Pancreas (tissue), 10 donors: ENCODE measurements at regions of chr6 and their contacts with region 1.

Region 1: GRCh38 chr6:64914134-64914533 is 792.9 kb downstream of the EYS start:
- DNase-seq: no peak
- ATAC-seq: no peak
- H3K4me3 ChIP-seq: no peak overlapping the region
- H3K27ac ChIP-seq: no peak overlapping the region
- H3K4me1 ChIP-seq: no peaks in the 10 kb centered on the region
- H3K27me3 ChIP-seq: no peaks in the 10 kb centered on the region
- CTCF ChIP-seq: no peak

Region 2: DNA sequence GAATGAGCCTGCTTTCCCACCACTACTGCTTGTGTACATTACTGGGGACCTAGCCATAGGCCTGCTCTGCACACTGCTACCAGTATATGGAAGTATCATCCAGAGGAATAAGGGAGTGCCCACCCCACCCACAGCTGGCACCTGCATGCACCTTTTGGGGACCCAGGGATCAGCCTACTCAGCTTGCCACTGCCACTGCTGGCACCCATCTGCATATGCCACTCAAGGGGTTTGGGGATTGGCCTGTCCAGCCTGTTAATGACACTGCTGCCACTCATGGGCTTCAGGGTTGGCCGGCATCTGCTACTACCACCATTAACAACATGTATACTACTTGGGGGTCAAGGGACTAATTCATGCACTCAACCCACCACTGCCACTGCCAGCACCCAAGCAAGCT is 446.5 kb before region 1 on chr6:
- intact Hi-C with region 1: no loop called
- DNase-seq: peak in 1 of 6 donors; percentile 34
- ATAC-seq: no peak
- H3K4me3 ChIP-seq: no peak overlapping the region
- H3K27ac ChIP-seq: no peak overlapping the region
- H3K4me1 ChIP-seq: no peaks in the 10 kb centered on the region
- H3K27me3 ChIP-seq: no peaks in the 10 kb centered on the region
- CTCF ChIP-seq: no peak

Region 3: DNA sequence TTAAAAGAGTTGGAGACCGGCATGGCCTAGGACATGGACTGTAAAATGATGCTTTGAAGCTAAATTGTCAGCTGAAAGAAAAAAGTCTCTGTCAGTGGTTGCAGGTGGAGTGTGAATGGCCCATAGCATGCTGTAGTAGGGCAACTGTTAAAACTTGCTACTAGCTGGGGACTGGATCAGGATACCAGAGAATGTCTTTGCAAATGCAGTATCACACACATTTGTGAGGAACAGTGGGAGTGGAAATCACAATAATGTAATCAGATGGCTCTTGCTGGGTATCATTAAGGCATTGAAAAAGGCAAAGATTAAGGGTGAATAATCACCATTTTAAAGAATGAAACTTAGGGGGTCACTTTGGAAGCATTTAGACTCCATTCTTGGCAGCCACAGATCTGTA is 55.0 kb after region 1 on chr6:
- intact Hi-C with region 1: loop called in 1 of 3 experiments (anchors 10 kb)
- DNase-seq: no peak
- ATAC-seq: no peak
- H3K4me3 ChIP-seq: no peak overlapping the region
- H3K27ac ChIP-seq: no peak overlapping the region
- H3K4me1 ChIP-seq: no peaks in the 10 kb centered on the region
- H3K27me3 ChIP-seq: no peaks in the 10 kb centered on the region
- CTCF ChIP-seq: no peak